ENCODE measurements at regions of chr7 and their contacts with region 1.

Region 1: DNA sequence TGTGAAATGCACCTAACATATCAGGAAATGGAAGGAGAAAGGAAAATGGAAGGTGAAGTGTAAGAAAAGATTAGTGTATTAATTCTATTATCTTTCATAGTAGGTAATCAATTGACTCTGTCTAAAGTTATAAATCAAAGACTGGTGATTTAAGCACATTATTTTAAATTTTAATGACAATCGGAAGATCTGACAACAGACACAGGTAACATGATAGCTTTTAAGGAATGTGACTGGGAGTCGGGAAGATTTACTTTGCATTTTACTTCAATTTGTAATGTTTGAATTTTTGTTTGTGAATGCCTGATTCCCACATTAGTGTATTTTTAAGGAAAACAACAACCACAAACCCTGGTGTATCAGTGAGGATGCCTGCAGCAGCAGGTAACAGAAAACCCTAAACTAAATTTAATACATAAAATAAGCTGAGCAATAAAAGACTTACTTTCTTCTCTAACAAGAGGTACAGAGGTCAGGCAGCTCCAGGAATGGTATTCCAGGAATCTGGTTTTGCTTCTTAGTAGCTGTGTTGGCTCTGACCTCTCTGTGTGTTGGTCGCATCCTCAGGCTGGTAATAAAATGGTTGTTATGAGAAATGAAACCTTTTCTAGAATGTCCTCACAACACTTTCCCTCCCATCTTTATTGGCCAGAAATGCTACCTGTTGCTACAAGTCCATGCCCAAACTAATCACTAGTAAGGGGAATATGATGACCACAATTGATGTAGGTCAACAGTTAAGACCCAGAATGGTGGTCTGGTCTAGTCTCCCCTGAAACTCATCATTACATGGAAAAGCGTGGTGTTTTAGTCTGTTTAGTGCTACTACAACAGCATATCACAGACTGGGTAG is 12.2 kb downstream of the DNAJB9 start:
- DNase-seq: peak; percentile 82 to 89
- H3K4me3 ChIP-seq: no peak overlapping the region
- H3K4me3 Mint-ChIP-seq: peak overlapping the region; percentile 44
- H3K27ac Mint-ChIP-seq: peak overlapping the region; percentile 97
- H3K4me1 ChIP-seq: peaks cover 26% of the 10 kb centered on the region
- H3K4me1 Mint-ChIP-seq: peaks cover 36% of the 10 kb centered on the region
- H3K27me3 ChIP-seq: no peaks in the 10 kb centered on the region
- H3K27me3 Mint-ChIP-seq: no peaks in the 10 kb centered on the region
- CTCF ChIP-seq: no peak

Region 2: GRCh38 chr7:108569381-108570145 is 12.3 kb before region 1 on chr7 and contains the starts of genes DNAJB9 and THAP5:
- CTCF ChIA-PET with region 1: interaction called, 4 read pairs
- POLR2A ChIA-PET with region 1: interaction called, 7 read pairs
- intact Hi-C with region 1: loop called (anchors 1 kb)
- DNase-seq: peak; percentile 99 to 100
- H3K4me3 ChIP-seq: peak within 1 kb of the TSS; percentile 93
- H3K4me3 Mint-ChIP-seq: peak within 1 kb of the TSS; percentile 98
- H3K27ac Mint-ChIP-seq: peak within 1 kb of the TSS; percentile 98
- H3K4me1 ChIP-seq: no peaks in the 10 kb centered on the region; the same call in 1 of the 2 replicates
- H3K4me1 Mint-ChIP-seq: no peaks in the 10 kb centered on the region
- H3K27me3 ChIP-seq: no peaks in the 10 kb centered on the region
- H3K27me3 Mint-ChIP-seq: no peaks in the 10 kb centered on the region
- CTCF ChIP-seq: no peak
- total RNA-seq, gene DNAJB9: 22.0 and 22.1 TPM in 2 replicates
- total RNA-seq, gene THAP5: 18.3 and 20.4 TPM in 2 replicates

Region 3: DNA sequence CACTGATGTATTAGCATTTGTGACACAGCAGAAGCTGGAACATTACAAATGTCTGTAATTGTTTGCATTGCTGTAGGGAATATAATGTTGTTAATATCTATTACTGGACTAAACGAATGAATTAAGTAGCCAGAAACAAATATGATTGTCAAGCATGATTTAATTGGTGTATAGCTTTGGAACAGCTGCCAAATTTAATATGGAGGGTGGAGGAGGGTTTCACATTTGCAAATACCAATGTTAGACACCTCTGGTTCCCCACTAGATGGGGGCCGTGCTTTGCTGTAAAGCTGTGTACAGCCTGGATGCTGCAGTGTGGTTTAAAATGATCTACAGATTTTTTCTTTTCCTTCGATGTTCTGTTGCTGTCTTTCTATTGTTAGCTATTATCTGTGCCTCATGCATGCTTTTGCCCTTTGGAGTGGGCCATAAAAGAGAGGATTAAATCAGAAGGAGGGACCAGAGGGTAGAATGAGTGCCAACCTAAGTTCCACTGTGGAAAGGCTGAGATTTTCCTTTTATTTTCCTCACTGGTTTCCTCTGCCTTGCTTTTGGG is 10.9 kb after region 1 on chr7:
- CTCF ChIA-PET with region 1: interaction called, 3 read pairs
- POLR2A ChIA-PET with region 1: interaction called, 6 read pairs
- intact Hi-C with region 1: loop called (anchors 1 kb)
- DNase-seq: peak; percentile 61 to 69
- H3K4me3 ChIP-seq: no peak overlapping the region
- H3K4me3 Mint-ChIP-seq: no peak overlapping the region
- H3K27ac Mint-ChIP-seq: no peak overlapping the region
- H3K4me1 ChIP-seq: peaks cover 20% of the 10 kb centered on the region
- H3K4me1 Mint-ChIP-seq: peaks cover 19% of the 10 kb centered on the region
- H3K27me3 ChIP-seq: no peaks in the 10 kb centered on the region
- H3K27me3 Mint-ChIP-seq: no peaks in the 10 kb centered on the region
- CTCF ChIP-seq: peak; percentile 45 to 71